GM10248 (cell line): ENCODE measurements at regions of chr20 and their contacts with region 1.

Region 1: GRCh38 chr20:20440886-20441654 is 73.2 kb downstream of the INSM1 start:
- DNase-seq: no peak
- CTCF ChIP-seq: no peak

Region 2: DNA sequence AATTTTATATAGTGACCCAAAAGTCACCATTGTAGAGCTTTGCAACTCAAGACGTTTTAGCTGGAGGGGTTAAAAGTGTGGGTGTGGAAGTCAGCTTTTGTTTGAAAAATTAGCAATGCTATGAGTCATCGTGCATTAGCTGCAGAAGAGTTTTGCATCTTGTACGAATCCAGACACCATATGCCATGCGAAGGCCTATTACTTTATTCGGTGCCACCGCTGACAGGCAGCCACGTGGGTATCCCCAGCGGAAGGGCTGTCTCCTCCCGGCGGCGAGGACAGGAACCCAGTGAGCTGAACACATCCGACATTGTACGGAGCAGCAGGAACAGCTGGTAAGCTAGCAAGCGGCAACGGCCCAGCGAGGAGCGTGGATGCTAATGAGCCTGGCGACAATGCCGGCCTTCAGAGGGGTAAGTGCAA is 11.2 kb after region 1 on chr20:
- CTCF ChIA-PET with region 1: interaction called, 14 read pairs
- POLR2A ChIA-PET with region 1: no interaction called
- DNase-seq: peak; percentile 64
- CTCF ChIP-seq: no peak